ENCODE measurements at regions of chr1 and their contacts with region 1.

Region 1: GRCh38 chr1:65509912-65510680 is 89.6 kb downstream of the LEPR start:
- DNase-seq: no peak
- H3K4me3 ChIP-seq: no peak overlapping the region
- CTCF ChIP-seq: no peak

Region 2: GRCh38 chr1:65393347-65393746 is 116.7 kb before region 1 on chr1:
- in situ Hi-C with region 1: no loop called
- DNase-seq: no peak
- H3K4me3 ChIP-seq: no peak overlapping the region
- CTCF ChIP-seq: no peak

Region 3: GRCh38 chr1:65431111-65431705 is 78.9 kb before region 1 on chr1:
- in situ Hi-C with region 1: no loop called
- DNase-seq: peak; percentile 55
- H3K4me3 ChIP-seq: no peak overlapping the region
- CTCF ChIP-seq: peak; percentile 55

Region 4: GRCh38 chr1:65596768-65597167 is 86.7 kb after region 1 on chr1:
- in situ Hi-C with region 1: loop called (anchors 5 kb)
- DNase-seq: no peak
- H3K4me3 ChIP-seq: no peak overlapping the region
- CTCF ChIP-seq: no peak